Left cardiac atrium (tissue), 4 donors: ENCODE measurements at regions of chr5 and their contacts with region 1.

Region 1: DNA sequence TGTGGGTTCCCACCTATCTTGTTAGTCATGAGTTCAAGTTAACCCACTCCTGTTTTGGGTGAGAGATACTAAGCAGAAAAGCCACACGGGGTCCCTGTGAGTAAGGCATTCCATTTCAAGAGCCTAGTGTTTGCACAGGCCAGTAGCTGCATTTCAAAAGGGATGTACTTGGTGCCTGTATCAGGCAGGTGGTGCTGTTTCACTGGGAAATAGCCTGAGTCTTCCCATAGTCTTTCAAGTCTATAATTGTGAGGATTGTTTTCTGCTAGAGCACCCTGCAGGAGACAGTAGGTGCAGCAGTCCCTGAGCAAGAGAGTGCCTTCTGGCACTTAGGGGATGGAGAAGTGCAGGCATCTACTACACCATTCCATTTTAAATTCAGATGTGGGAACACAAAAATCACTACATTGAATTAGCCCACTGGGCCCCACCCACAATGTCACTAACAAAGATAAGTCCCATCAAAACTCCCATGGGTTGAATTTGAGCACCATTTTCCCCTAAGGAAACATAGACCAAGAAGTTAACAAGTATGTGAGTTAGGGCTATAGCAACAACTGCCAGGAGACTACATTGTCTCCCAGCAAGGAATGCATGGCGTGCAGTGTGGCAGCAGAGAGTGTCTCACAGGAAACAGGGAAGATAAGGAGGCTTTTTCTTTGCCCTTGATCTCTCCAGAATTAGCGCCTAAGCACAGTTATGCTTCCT is 263.2 kb downstream of the COX7C start:
- DNase-seq: peak; percentile 34
- ATAC-seq: peak; percentile 94

Region 2: GRCh38 chr5:86143837-86144236 is 737.1 kb before region 1 on chr5:
- intact Hi-C with region 1: no loop called
- DNase-seq: peak; percentile 31
- ATAC-seq: peak; percentile 63 to 85

Region 3: GRCh38 chr5:86596476-86596875 is 284.5 kb before region 1 on chr5:
- intact Hi-C with region 1: no loop called
- DNase-seq: no peak
- ATAC-seq: no peak

Region 4: DNA sequence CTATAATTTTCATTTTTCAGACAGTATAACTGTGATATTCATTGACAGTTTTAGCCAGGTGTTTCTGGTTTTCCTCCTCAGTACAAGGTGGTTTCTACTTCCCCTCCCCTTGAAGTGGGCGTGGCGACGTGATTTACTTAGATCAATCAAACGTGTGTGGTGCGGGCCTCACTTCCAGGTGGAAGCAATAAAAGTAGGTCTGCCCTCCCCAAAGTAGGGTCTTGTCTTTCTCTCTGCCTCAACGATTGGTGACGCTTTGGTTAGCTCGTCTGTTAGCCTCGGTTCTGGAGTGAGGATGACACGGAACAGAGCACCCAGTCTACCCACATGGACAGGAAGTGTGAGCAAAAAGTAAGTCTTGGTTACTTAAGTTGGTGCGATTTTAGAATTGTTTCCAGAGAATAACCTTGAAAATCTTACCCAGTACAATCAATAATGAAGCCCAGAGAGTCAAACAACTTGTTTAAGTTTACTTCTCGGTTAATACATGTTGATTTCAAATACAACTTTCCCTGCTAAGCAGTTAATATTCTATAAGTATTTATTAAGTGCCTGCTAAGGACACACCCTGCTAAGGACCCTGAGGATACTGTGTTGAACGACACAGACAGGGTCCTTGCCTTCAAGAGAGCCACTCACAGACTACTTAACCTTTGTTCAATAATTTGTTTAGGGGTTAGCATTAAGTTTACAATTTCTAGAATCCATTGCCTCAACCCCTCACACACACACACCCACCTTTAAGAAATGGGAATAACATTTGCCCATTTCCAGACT is 214.8 kb before region 1 on chr5:
- intact Hi-C with region 1: no loop called
- DNase-seq: no peak
- ATAC-seq: no peak

Region 5: GRCh38 chr5:86968301-86968753 is 87.4 kb after region 1 on chr5:
- intact Hi-C with region 1: loop called (anchors 2 to 5 kb)
- DNase-seq: peak; percentile 40
- ATAC-seq: peak; percentile 44 to 88

Region 6: DNA sequence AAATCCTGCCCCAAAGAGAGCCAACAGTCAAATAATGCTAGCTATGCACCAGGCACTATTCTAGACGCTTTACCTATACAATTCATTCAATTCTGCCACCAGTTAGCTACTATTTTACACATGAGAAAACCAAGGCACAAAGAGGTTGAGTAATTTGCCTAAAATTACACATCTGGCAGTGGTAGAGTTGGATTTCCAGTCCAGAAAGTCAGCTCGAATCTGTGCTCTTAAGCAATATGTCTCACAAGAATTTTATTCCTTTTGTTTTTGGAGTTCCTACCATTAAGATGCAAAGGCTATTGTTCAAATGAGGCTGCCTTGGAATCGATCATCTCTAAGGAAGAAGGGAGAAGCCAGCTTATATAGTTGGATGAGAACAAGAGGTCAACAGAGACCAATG is 129.8 kb after region 1 on chr5:
- intact Hi-C with region 1: loop called in 1 of 2 experiments (anchors 5 kb)
- DNase-seq: no peak
- ATAC-seq: no peak